WTC11 (cell line): ENCODE measurements at regions of chr19 and their contacts with region 1.

Region 1: GRCh38 chr19:38245826-38246498 is 10.2 kb downstream of the PPP1R14A start:
- DNase-seq: no peak
- ATAC-seq: no peak
- H3K4me3 Mint-ChIP-seq: no peak overlapping the region
- H3K27ac Mint-ChIP-seq: 0 out of 2 replicates have a peak overlapping the region, but pooled peaks have one; percentile 3
- H3K4me1 Mint-ChIP-seq: peaks cover 17% of the 10 kb centered on the region
- H3K27me3 Mint-ChIP-seq: peaks cover 2% of the 10 kb centered on the region; the same call in 1 of the 2 replicates
- CTCF ChIP-seq: no peak

Region 2: DNA sequence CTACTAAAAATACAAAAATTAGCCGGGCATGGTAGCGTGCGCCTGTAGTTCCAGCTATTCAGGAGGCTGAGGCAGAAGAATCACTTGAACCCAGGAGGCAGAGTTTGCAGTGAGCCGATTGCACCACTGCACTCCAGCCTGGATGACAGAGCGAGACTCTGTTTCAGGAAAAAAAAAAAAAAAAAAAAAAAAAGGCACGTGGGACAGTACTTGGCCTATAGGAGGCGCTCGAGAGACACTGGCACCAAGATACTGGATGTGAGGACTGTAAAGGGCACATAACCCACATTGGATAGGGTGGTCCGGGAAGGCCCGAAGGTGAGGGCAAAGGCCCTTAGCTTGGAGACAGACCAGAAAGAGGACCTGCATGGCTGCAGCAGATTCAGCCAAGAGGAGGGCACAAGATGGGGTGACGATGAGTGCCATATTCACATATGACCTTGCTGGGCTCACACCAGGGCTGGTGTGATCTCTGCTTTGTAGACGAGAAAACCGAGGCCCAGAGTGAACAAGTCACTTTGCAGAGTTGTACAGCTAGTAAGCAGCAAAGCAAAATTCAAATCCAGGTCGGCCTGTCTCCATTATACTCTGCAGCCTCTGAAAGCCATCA is 111.3 kb before region 1 on chr19:
- CTCF ChIA-PET with region 1: no interaction called
- POLR2A ChIA-PET with region 1: no interaction called
- DNase-seq: peak; percentile 58
- ATAC-seq: peak; percentile 69
- H3K4me3 Mint-ChIP-seq: no peak overlapping the region
- H3K27ac Mint-ChIP-seq: no peak overlapping the region; the same call in 1 of the 2 replicates
- H3K4me1 Mint-ChIP-seq: peaks cover 17% of the 10 kb centered on the region
- H3K27me3 Mint-ChIP-seq: no peaks in the 10 kb centered on the region
- CTCF ChIP-seq: peak; percentile 79

Region 3: GRCh38 chr19:38190061-38190460 is 55.9 kb before region 1 on chr19:
- CTCF ChIA-PET with region 1: no interaction called
- POLR2A ChIA-PET with region 1: no interaction called
- DNase-seq: no peak
- ATAC-seq: no peak
- H3K4me3 Mint-ChIP-seq: no peak overlapping the region
- H3K27ac Mint-ChIP-seq: peak overlapping the region; percentile 45; the same call in 1 of the 2 replicates
- H3K4me1 Mint-ChIP-seq: no peaks in the 10 kb centered on the region
- H3K27me3 Mint-ChIP-seq: no peaks in the 10 kb centered on the region
- CTCF ChIP-seq: no peak

Region 4: DNA sequence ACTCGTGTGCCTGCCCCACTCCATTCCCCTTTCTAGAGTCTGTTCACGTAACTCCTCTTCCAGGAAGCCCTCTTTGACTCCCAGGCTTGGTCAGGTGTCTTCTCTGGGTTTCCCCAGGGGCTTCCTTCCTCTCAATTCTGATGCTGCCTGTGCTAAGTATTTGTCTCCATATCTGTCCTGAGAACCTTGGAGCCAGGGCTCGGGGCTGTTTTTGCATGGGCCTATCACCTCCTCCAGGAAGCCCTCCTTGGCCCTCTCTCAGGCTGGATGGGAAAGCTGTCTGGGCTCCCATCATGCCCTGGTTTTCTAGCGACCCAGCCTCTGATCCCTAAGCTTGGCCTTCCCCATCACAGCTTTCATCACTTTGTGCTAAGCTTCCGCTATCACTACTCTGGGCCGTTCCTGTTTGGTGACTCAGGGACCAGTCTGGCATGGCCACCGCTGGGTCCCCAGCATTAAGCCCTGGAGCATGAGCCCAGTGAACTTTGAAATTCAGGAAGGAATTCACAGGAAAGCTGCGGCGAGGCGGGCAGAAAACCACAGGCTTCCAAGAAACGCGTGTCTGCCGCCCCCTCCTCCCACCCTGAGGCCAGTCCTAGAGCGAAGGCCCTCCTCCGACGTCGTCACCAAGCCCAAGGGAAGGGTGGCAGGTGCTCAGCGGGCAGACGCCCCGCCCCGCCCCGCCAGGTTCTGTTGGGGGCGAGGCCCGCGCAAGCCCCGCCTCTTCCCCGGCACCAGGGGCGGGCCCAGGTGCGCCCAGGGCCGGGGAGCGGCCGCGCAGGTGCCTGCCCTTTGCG is 17.9 kb after region 1 on chr19:
- CTCF ChIA-PET with region 1: interaction called, 50 read pairs
- POLR2A ChIA-PET with region 1: interaction called, 20 read pairs
- DNase-seq: peak; percentile 97
- ATAC-seq: peak; percentile 89
- H3K4me3 Mint-ChIP-seq: peak overlapping the region; percentile 63
- H3K27ac Mint-ChIP-seq: peak overlapping the region; percentile 97
- H3K4me1 Mint-ChIP-seq: peaks cover 51% of the 10 kb centered on the region
- H3K27me3 Mint-ChIP-seq: no peaks in the 10 kb centered on the region
- CTCF ChIP-seq: no peak

Region 5: DNA sequence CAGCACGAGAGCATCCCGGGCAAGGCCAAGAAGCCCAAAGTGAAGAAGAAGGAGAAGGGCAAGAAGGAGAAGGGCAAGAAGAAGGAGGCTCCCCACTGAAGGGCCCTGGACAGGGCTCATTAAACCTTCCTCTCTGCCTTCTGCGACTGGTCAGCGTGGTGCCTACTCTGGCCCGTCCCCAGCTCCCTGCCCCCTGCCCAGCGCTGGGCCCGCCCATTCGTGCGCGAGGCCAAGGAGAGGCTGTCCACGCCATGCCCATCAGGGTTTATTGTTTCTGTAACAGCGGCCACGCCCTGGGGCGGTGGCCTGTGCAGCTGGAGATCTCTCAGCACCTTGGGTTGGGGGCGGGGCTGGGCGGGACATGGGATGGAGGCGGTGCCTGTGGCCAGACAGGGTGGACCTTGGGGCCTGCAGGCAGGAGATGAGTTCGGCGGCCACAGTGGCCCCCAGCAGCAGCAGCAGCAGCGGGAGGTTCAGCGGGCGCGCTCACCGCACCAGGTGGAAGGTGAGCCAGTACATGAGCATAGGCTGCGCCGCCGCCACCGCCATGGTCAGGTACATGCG is 59.0 kb after region 1 on chr19:
- CTCF ChIA-PET with region 1: interaction called, 10 read pairs
- POLR2A ChIA-PET with region 1: interaction called, 8 read pairs
- DNase-seq: peak; percentile 90
- ATAC-seq: peak; percentile 86
- H3K4me3 Mint-ChIP-seq: peak overlapping the region; percentile 74
- H3K27ac Mint-ChIP-seq: peak overlapping the region; percentile 88
- H3K4me1 Mint-ChIP-seq: peaks cover 16% of the 10 kb centered on the region
- H3K27me3 Mint-ChIP-seq: peaks cover 4% of the 10 kb centered on the region
- CTCF ChIP-seq: no peak

Region 6: DNA sequence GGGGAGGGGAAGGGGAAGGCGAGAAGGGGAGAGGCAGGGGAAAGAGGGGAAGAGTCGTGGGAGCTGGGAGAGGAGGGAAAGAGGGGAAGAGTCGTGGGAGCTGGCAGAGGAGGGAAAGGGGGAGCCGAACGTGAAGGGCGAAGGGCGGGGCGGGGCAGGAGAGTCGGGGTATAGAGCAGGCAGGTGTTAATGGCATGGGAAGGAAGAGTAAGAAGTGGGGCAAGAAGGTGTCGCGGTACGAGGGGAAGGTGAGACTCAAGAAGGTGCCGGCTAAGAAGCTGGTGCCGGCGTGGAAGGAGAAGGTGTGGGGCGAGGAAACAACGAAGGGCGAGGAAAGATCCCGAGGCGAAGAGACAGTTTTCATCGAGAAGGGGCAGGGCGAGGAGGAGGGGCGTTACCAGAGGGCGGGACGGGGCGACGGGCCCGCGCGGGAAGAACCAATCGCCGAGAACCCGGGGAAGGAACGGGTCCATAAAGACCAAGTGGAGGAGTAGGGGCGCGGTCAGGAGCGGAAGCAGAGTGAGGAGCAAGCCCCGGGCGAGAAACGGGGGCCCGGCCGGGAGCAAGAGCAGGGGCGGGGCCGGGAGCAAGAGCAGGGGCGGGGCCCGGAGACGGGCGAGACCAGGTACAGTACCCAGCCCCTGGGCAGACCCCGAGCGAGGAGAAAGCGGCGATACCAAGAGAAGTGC is 90.1 kb after region 1 on chr19:
- CTCF ChIA-PET with region 1: interaction called, 50 read pairs
- POLR2A ChIA-PET with region 1: interaction called, 6 read pairs
- DNase-seq: peak; percentile 93
- ATAC-seq: peak; percentile 71
- H3K4me3 Mint-ChIP-seq: peak overlapping the region; percentile 100
- H3K27ac Mint-ChIP-seq: peak overlapping the region; percentile 100
- H3K4me1 Mint-ChIP-seq: peaks cover 11% of the 10 kb centered on the region
- H3K27me3 Mint-ChIP-seq: peaks cover 3% of the 10 kb centered on the region; the same call in 1 of the 2 replicates
- CTCF ChIP-seq: no peak

Region 7: DNA sequence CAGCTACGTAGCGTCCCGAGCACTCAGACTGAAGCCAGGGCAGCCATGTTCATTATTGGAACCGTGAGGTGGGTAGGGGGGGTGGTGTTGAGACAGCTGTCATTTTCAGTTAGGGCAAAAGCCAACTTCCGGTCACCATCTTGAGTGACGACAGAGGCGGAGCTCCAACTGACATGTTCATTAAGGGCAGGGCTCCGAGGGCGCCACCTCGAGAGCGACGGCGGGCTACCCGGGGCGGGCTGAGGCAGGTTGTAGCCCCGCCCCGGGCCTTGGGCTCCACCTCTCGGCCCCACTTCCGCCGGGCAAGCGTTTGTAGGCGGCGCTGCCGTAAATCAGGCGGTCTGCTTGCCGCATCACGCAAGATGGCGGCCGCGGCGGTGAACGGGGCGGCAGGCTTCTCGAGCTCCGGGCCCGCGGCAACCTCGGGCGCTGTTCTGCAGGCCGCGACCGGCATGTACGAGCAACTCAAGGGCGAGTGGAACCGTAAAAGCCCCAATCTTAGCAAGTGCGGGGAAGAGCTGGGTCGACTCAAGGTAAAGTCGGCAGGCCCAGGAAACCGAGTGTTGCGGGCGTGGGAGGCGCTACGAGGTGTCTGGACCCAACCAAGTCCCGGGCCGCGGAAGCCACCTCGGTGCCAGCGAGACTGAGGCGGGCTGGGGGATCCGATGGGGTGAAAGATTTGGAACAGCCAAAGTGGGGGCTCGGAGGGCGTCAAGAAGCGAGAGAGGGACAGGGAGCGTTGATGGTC is 128.6 kb after region 1 on chr19 and contains the start of gene PSMD8:
- CTCF ChIA-PET with region 1: interaction called, 27 read pairs
- POLR2A ChIA-PET with region 1: interaction called, 6 read pairs
- DNase-seq: peak; percentile 99
- ATAC-seq: peak; percentile 99
- H3K4me3 Mint-ChIP-seq: peak within 1 kb of the TSS; percentile 100
- H3K27ac Mint-ChIP-seq: peak within 1 kb of the TSS; percentile 75
- H3K4me1 Mint-ChIP-seq: peaks cover 14% of the 10 kb centered on the region
- H3K27me3 Mint-ChIP-seq: peaks cover 25% of the 10 kb centered on the region
- CTCF ChIP-seq: no peak
- total RNA-seq, gene PSMD8: 156 to 167 TPM (median 160 TPM) in 3 replicates

Region 8: DNA sequence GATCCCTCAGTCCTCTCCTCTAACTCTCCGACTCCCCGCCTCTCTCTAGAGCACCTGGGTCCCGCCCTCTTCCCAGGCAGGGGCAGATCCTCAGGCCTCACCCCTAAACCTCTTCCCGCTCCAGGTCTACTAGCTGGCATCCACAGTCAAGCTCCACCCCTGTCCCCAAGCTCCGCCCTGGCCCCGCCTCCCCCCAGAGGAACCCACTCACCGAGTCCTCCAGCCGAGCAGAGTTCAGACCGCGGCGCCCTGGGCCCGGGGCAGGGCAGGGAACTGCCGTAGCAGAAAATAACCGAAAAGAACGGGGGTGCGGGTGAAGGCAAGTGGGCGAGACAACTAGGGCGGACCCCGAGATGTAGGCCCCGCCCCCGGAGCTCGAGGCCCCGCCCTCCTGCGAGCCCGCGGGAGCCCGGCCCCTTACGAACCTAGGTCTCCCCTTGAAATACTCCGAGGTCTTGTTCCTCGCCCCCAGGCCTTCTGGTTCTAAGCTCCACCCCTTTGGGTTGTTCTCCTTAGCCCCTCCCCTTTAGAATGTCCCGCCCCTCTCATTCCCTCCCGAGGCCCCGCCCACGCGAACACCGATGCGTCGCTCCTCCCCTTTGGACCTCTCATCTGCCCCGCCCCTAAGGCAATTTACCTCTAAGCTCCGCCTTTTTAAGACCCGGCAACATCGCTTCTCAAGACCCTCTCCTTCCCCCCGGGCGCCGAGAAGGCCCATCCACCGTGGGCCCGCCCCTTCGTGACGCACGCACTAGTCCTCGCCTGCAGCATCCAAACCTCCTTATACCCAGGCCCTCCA is 141.8 kb after region 1 on chr19 and contains the start of gene GGN:
- CTCF ChIA-PET with region 1: interaction called, 20 read pairs
- POLR2A ChIA-PET with region 1: interaction called, 3 read pairs
- DNase-seq: peak; percentile 98
- ATAC-seq: peak; percentile 77
- H3K4me3 Mint-ChIP-seq: peak within 1 kb of the TSS; percentile 85
- H3K27ac Mint-ChIP-seq: peak within 1 kb of the TSS; percentile 97
- H3K4me1 Mint-ChIP-seq: peaks cover 28% of the 10 kb centered on the region
- H3K27me3 Mint-ChIP-seq: peaks cover 3% of the 10 kb centered on the region; the same call in 1 of the 2 replicates
- CTCF ChIP-seq: no peak
- total RNA-seq, gene GGN: 2.4 to 3.1 TPM (median 2.7 TPM) in 3 replicates